BJ (cell line): ENCODE measurements at regions of chr12 and their contacts with region 1.

Region 1: DNA sequence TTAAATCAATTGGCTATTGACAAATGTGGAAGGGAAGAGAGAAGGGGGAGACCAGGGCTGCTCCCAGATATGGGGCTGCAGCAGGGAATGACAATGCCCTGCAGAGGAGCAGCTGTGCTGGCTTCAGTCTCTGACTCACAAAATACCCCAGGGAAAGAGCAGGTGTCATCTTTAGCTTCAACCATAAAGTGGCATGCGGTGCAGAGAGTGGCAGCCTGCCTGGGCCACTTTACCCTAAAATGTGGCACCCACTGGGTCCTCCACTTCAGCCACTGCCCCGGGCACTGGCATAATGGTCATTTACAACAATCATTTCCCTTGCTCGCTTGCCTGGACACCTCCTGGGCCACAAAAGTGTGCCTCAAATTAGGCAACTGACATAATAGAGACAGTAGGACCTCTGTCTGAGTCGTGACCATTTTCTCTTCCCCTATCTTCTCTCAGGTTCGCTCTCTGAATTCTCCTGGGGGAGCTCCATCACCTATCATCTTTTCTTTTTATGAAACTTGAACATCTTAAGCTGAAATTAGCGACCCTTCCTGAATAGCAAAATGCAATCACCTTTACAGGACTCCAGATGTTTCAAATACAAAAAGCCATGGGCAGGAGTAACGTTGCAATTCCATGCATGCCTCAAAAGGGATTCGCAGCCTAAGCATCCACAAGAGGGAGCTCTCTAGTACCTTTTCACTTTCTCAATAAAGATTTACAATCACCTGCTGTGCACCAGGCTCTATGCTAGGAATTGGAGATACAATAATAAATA is 179.9 kb upstream of the ATF7IP start:
- DNase-seq: no peak
- H3K4me3 ChIP-seq: no peak overlapping the region
- H3K27me3 ChIP-seq: no peaks in the 10 kb centered on the region
- CTCF ChIP-seq: peak; percentile 76

Region 2: GRCh38 chr12:14167005-14167628 is 18.5 kb before region 1 on chr12:
- CTCF ChIA-PET with region 1: interaction called, 26 read pairs
- POLR2A ChIA-PET with region 1: no interaction called
- DNase-seq: no peak
- H3K4me3 ChIP-seq: no peak overlapping the region
- H3K27me3 ChIP-seq: no peaks in the 10 kb centered on the region
- CTCF ChIP-seq: peak; percentile 95

Region 3: DNA sequence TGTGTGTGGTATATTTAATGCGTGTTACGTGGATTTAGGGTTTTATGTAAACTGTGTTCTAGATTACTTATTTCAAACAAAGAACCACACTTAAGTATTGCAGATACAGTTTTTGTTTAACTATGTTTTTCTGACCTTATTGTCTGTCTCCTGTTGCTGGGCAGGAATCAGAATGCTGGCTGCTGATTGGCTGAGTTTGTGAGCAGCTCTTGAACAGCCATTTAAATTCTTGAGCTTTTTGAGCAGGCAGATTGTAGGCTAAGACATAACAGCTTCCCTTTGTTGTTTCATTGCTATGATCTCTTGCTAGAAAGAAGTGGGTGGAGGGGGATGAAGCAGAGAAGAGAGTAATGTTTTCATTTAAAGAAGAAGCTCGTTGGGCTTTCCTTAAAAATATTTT is 232.1 kb after region 1 on chr12:
- CTCF ChIA-PET with region 1: no interaction called
- POLR2A ChIA-PET with region 1: no interaction called
- DNase-seq: peak; percentile 25
- H3K4me3 ChIP-seq: no peak overlapping the region
- H3K27me3 ChIP-seq: no peaks in the 10 kb centered on the region
- CTCF ChIP-seq: no peak

Region 4: DNA sequence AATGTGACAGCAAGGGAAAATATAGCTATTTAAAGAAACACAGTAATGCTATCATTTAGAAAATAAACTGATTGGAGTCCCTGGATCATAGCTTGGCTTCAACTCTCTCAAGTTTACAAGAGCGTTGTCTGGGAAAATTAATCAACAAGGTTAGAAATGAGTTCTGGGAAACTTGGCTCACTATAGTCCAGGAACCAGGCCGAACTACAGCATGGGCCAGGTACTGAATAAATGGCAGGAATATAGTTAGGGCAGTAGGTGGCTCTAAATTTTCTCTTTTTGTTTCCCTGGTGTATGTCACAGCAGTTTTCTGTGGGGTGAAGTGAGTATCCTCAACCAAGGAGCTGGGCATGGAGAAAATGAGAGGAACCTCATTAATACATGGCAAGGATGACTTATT is 309.7 kb after region 1 on chr12:
- CTCF ChIA-PET with region 1: no interaction called
- POLR2A ChIA-PET with region 1: no interaction called
- DNase-seq: no peak
- H3K4me3 ChIP-seq: no peak overlapping the region
- H3K27me3 ChIP-seq: no peaks in the 10 kb centered on the region
- CTCF ChIP-seq: no peak